ENCODE measurements at regions of chr4 and their contacts with region 1.

Region 1: GRCh38 chr4:125045311-125045710 is 269.4 kb upstream of the FAT4 start:
- DNase-seq: no peak
- H3K27ac ChIP-seq: no peak overlapping the region
- CTCF ChIP-seq: no peak

Region 2: GRCh38 chr4:124499261-124499660 is 546.0 kb before region 1 on chr4:
- CTCF ChIA-PET with region 1: interaction called, 10 read pairs
- POLR2A ChIA-PET with region 1: no interaction called
- DNase-seq: no peak
- H3K27ac ChIP-seq: no peak overlapping the region
- CTCF ChIP-seq: no peak

Region 3: DNA sequence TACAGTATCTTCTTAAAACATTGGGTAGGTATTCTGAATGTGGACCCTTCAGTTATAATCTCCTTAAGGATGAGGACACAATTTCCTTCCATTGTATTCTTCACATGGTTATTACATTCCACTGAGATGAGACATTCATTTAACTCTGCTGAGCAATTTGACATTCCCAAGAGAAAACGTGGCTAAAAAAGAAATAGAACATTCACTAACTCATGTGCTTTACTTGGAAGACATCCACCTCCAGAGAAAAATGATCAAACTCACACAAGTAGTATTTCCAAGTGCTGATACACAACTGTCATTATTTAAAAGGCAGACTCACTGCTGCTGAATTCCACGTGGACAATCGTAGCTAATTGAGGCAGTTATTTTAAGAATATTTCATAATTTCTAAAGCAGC is 104.9 kb before region 1 on chr4:
- CTCF ChIA-PET with region 1: no interaction called
- POLR2A ChIA-PET with region 1: no interaction called
- DNase-seq: peak; percentile 57
- H3K27ac ChIP-seq: no peak overlapping the region
- CTCF ChIP-seq: no peak

Region 4: DNA sequence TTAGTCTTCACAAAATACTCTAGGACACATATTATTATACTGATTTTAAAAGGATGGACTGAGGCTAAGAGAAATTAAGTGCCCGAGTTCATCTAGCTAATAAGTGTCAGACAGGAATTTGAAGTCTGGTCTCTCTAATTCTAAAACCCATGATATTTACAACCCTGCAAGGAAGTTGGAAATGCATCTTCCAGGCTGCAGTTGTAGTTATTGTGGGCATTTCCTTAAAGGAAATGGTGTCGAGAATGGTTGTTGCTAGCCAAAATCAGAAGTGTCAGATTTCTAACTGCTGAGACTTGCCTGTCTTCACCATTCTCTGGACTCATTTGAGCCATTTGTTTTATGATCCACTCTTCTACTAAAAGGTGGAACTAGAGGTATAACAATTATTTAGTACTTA is 351.9 kb after region 1 on chr4:
- CTCF ChIA-PET with region 1: no interaction called
- POLR2A ChIA-PET with region 1: no interaction called
- DNase-seq: no peak
- H3K27ac ChIP-seq: no peak overlapping the region
- CTCF ChIP-seq: no peak

Measured in RWPE1 (cell line).